Activated CD4-positive, alpha-beta T cell treated with anti-CD3 and anti-CD28 coated beads, Interleukin-2, amount 10 ng/mL, durations not matched to agents 7 days and 5 days (primary cell): ENCODE measurements at regions of chr17 and their contacts with region 1.

Region 1: DNA sequence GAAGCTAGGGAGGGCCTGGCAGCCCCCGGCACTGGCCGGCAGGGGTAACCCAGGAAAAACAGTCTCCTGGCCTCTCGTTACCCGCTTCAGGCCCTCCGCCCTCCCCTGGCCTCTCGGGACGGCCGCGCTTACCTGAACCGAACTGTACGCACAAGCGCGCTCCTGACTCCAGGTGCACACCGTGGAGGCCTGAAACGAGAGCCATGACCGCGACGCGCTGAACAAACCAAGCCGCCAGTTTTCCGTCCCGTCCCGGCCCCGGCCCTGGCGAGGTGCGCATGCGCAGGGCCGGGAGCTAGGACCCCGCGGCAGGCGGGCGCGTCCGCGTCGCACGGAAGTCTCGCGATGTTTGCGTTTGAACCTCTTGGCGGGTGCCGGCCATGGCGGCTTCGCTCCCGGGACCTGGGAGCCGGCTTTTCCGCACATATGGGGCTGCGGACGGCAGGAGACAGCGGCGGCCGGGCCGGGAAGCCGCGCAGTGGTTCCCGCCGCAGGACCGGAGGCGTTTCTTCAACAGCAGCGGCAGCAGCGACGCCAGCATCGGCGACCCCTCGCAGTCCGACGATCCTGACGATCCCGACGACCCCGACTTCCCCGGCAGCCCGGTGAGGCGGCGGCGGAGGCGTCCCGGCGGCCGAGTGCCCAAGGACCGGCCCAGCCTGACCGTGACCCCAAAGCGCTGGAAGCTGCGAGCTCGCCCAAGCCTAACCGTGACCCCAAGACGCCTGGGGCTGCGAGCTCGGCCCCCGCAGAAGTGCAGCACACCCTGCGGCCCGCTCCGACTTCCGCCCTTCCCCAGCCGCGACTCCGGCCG is at the start of gene HASPIN:
- DNase-seq: peak; percentile 94
- H3K4me3 Mint-ChIP-seq: peak within 1 kb of the TSS; percentile 95
- H3K27ac Mint-ChIP-seq: peak within 1 kb of the TSS; percentile 89
- H3K4me1 Mint-ChIP-seq: peaks cover 65% of the 10 kb centered on the region
- H3K27me3 Mint-ChIP-seq: no peaks in the 10 kb centered on the region
- total RNA-seq, gene HASPIN: 27.6 to 31.2 TPM

Region 2: DNA sequence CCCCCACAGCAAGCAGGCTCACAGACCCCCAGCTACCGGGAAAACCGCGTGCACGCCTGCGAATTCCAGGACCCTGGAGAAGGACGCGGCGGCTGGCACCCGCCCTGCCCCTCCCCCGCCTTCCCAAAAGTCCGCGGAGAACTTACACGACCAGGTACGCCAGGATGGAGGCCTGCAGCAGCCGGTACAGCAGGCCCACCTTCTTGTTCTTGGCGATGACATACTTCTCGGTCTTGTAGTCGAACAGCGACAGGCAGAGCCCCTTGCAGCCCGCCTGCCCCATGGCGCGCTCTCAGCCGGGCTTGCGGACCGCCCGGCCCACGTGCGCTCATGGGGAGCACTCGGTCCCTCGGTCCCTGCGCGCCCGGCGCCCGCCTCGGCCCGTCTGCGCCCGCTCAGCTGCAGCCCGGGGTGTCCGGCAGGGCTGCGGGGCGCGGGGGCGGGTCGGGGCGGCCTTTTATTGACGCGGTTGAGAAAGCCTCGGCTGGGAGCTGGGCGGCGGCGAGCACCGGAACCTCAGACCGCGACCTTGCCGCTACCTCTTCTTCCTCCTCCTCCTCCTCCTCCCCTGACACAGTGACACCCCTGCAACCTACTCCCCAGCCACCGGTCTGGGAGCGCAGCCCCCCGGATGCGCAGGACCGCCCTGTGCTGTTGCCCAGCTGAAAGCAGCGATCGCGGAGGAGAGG is 27.9 kb before region 1 on chr17 and contains the start of gene P2RX5:
- CTCF ChIA-PET with region 1: interaction called, 8 read pairs
- POLR2A ChIA-PET with region 1: interaction called, 28 read pairs
- DNase-seq: peak; percentile 55
- H3K4me3 Mint-ChIP-seq: peak within 1 kb of the TSS; percentile 85
- H3K27ac Mint-ChIP-seq: peak within 1 kb of the TSS; percentile 91
- H3K4me1 Mint-ChIP-seq: peaks cover 33% of the 10 kb centered on the region
- H3K27me3 Mint-ChIP-seq: no peaks in the 10 kb centered on the region
- total RNA-seq, gene P2RX5: 33.6 to 39.4 TPM

Region 3: GRCh38 chr17:3710951-3711383 is 12.8 kb before region 1 on chr17:
- CTCF ChIA-PET with region 1: interaction called, 16 read pairs
- POLR2A ChIA-PET with region 1: interaction called, 5 read pairs
- DNase-seq: peak; percentile 88
- H3K4me3 Mint-ChIP-seq: peak overlapping the region; percentile 66
- H3K27ac Mint-ChIP-seq: peak overlapping the region; percentile 95
- H3K4me1 Mint-ChIP-seq: peaks cover 65% of the 10 kb centered on the region
- H3K27me3 Mint-ChIP-seq: no peaks in the 10 kb centered on the region

Region 4: GRCh38 chr17:3754458-3755334 is 30.9 kb after region 1 on chr17:
- CTCF ChIA-PET with region 1: no interaction called
- POLR2A ChIA-PET with region 1: no interaction called
- DNase-seq: peak; percentile 67
- H3K4me3 Mint-ChIP-seq: no peak overlapping the region
- H3K27ac Mint-ChIP-seq: no peak overlapping the region
- H3K4me1 Mint-ChIP-seq: peaks cover 39% of the 10 kb centered on the region
- H3K27me3 Mint-ChIP-seq: no peaks in the 10 kb centered on the region